ENCODE measurements at regions of chr3 and their contacts with region 1.

Region 1: GRCh38 chr3:9986237-9986725 is 360 bp downstream of the EMC3 start:
- DNase-seq: no peak
- ATAC-seq: peak; percentile 52
- H3K4me3 ChIP-seq: peak overlapping the region; percentile 100
- H3K4me3 Mint-ChIP-seq: peak overlapping the region; percentile 95 to 99 (median 98)
- H3K27ac ChIP-seq: peak overlapping the region; percentile 96
- H3K27ac Mint-ChIP-seq: peak overlapping the region; percentile 95 to 100 (median 98)
- H3K4me1 ChIP-seq: peaks cover 13 to 15% of the 10 kb centered on the region in 2 donors
- H3K4me1 Mint-ChIP-seq: peaks cover 0 to 48% (median 35%) of the 10 kb centered on the region in 7 donors
- H3K27me3 ChIP-seq: no peaks in the 10 kb centered on the region
- H3K27me3 Mint-ChIP-seq: no peaks in the 10 kb centered on the region

Region 2: DNA sequence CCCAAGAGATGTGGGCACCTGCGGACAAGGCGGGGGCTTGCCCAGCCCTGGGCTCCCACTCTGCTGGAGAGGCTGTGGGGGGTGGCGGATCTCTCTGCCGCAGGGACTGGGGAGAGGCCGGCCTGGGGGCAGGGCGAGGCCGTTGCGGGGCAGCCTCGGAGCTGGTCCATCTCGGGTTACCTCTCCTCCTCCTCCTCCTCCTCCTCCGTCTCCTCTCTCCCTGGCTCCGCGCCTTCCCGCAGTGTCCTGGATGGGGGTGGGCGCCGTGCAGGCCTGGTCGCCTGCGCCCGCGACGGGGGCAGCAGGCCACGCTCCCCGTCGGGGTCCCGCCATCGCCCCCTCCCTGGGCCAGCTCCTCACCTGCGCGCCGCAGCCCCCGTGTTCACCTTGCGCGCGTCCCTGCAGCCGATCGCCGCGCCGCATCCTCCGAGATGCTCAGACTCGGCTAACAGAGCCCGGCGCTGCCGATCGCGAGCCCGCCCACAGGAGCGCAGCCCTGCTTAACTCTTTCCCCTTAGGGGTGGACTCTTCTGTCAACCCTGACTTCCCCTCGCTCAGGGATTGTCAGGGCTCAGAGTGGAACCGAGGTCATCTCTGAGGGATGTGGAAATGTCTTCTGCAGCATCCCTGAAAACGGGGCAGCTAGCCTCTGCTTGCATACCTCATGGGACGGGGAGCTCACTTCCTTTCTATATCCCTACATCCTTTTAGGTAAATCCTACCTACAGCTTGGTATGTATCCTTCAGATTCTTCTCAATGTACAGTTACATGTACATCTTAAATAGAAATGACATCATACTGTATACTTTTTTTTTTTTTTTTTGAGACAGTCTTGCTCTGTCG is 34.1 kb before region 1 on chr3 and contains the start of gene PRRT3:
- CTCF ChIA-PET with region 1: interaction called, 3 read pairs
- POLR2A ChIA-PET with region 1: interaction called, 8 read pairs
- intact Hi-C with region 1: loop called (anchors 2 to 5 kb)
- DNase-seq: peak; percentile 23 to 63 (median 51)
- ATAC-seq: peak; percentile 89
- H3K4me3 ChIP-seq: peak within 1 kb of the TSS; percentile 51
- H3K4me3 Mint-ChIP-seq: peak within 1 kb of the TSS; percentile 83 to 91 (median 86)
- H3K27ac ChIP-seq: peak within 1 kb of the TSS; percentile 60
- H3K27ac Mint-ChIP-seq: peak within 1 kb of the TSS in 8 of 9 donors; percentile 36 to 70 (median 62)
- H3K4me1 ChIP-seq: peaks cover 11 to 15% of the 10 kb centered on the region in 2 donors
- H3K4me1 Mint-ChIP-seq: peaks cover 10 to 24% (median 16%) of the 10 kb centered on the region in 7 donors
- H3K27me3 ChIP-seq: no peaks in the 10 kb centered on the region
- H3K27me3 Mint-ChIP-seq: no peaks in the 10 kb centered on the region
- total RNA-seq, gene PRRT3: 5.1 to 10.8 (median 8.8) TPM

Region 3: DNA sequence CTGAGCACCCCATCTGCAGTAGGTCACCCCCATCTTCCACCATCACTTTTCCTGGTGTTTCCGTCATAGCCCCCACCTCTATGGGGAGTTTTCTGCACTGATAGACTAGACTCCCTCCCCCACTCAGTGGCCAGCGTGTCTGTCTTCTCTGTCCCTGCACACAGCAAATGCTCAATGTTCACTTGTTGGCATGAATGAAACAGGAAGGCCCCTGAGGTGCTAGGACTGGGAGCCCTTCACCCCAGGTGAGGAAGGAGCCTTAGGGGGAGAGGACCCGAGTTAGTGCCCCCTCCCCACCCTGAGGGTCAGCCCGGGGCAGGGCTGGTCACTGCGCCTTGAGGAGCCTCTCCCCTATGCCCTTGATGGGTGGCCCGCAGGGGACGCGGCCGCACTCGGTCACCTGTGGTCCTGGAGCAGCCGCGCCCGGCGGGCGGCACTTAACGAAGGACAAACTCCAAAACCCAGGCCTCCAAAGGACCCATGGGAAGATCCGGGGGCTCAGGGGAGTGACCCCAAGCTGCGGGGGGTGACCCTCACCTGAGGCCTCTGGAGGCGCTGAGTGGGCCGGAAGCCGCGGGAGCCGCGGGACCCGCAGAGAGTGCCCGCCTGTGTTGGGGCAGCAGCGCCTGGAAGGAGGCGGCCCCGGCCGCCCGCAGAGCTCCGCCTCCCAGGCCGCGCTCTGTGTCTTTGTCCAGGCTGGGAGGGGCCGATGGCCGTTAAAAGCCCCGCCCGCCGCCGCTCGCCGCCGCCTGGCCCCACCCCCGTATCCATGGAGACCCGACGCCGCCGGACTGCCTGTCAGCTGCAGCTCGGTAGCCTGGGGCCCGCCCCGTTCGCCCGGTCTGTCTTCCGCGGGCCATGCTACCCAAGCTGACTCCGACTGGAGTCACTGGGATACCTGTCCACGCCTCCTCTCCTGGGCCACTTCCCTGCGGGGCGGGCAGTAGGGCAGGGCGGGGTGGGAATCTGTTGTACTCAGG is 24.5 kb after region 1 on chr3:
- CTCF ChIA-PET with region 1: no interaction called
- POLR2A ChIA-PET with region 1: interaction called, 4 read pairs
- intact Hi-C with region 1: loop called (anchors 1 kb)
- DNase-seq: peak; percentile 25 to 91 (median 46)
- ATAC-seq: peak; percentile 90
- H3K4me3 ChIP-seq: peak overlapping the region; percentile 44
- H3K4me3 Mint-ChIP-seq: peak overlapping the region; percentile 24 to 81 (median 70)
- H3K27ac ChIP-seq: peak overlapping the region; percentile 9
- H3K27ac Mint-ChIP-seq: peak overlapping the region in 2 of 9 donors; percentile 28 to 57
- H3K4me1 ChIP-seq: peaks cover 0 to 14% of the 10 kb centered on the region in 2 donors
- H3K4me1 Mint-ChIP-seq: peaks cover 15 to 28% (median 19%) of the 10 kb centered on the region in 7 donors
- H3K27me3 ChIP-seq: no peaks in the 10 kb centered on the region
- H3K27me3 Mint-ChIP-seq: peaks cover 0 to 19% (median 14%) of the 10 kb centered on the region in 5 donors